ENCODE measurements at regions of chr13 and their contacts with region 1.

Region 1: DNA sequence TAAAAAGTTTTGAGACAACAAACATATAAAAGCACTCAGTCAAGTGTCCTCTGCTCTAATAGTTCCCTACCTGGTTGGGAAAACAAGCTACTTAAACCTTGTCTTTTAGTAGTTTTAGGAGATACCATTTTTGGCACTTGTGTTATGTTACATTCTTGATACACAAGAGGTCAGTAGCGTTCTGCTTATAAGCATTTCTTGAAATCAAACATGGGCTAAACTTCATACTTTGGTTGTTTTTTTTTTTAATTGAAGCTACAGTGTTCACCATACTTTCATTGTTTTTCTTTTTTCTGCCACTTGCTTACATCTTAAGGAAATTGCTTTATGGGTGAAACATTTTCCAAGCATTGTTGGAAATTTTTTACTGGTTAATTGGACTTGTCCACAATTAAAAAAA is 12.9 kb downstream of the NHLRC3 start:
- DNase-seq: no peak
- H3K4me3 ChIP-seq: peak overlapping the region in 1 of 59 donors; percentile 28
- H3K27ac ChIP-seq: peak overlapping the region in 30 of 59 donors; percentile 0 to 81 (median 54)
- H3K27me3 ChIP-seq: no peaks in the 10 kb centered on the region
- CTCF ChIP-seq: peak; percentile 21 to 86 (median 69)

Region 2: GRCh38 chr13:38900188-38900587 is 151.0 kb before region 1 on chr13:
- intact Hi-C with region 1: no loop called
- DNase-seq: no peak
- H3K4me3 ChIP-seq: no peak overlapping the region
- H3K27ac ChIP-seq: no peak overlapping the region
- H3K27me3 ChIP-seq: no peaks in the 10 kb centered on the region
- CTCF ChIP-seq: peak in 21 of 56 donors; percentile 12 to 52 (median 26)

Region 3: DNA sequence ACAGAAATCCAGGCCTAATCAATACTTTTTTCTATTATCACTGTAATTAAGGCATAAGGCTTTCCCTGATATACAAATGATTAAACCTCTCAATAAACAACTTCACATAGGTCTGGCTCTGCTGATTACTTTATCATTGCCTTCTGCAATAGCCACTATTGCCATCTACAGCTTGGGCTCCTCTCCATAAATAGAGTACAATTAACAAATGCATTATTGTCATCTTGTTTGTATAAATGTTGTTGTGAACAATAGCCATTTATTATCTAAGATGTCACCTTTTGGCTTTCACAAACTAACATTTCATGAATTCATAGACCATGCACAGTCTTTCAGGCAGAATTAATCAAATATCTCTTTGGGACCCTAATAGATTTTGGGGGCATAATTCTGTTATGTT is 40.4 kb after region 1 on chr13:
- intact Hi-C with region 1: loop called in 1 of 2 experiments (anchors 2 kb)
- DNase-seq: no peak
- H3K4me3 ChIP-seq: peak overlapping the region in 9 of 59 donors; percentile 5 to 36 (median 16)
- H3K27ac ChIP-seq: peak overlapping the region; percentile 37 to 98 (median 94)
- H3K27me3 ChIP-seq: no peaks in the 10 kb centered on the region
- CTCF ChIP-seq: peak in 13 of 56 donors; percentile 10 to 46 (median 30)

Region 4: GRCh38 chr13:39422845-39423565 is 371.8 kb after region 1 on chr13:
- intact Hi-C with region 1: loop called in 1 of 2 experiments (anchors 10 kb)
- DNase-seq: no peak
- H3K4me3 ChIP-seq: no peak overlapping the region
- H3K27ac ChIP-seq: no peak overlapping the region
- H3K27me3 ChIP-seq: no peaks in the 10 kb centered on the region
- CTCF ChIP-seq: no peak

Measured in dorsolateral prefrontal cortex (tissue), 120 donors.